BJ (cell line): ENCODE measurements at regions of chr9 and their contacts with region 1.

Region 1: DNA sequence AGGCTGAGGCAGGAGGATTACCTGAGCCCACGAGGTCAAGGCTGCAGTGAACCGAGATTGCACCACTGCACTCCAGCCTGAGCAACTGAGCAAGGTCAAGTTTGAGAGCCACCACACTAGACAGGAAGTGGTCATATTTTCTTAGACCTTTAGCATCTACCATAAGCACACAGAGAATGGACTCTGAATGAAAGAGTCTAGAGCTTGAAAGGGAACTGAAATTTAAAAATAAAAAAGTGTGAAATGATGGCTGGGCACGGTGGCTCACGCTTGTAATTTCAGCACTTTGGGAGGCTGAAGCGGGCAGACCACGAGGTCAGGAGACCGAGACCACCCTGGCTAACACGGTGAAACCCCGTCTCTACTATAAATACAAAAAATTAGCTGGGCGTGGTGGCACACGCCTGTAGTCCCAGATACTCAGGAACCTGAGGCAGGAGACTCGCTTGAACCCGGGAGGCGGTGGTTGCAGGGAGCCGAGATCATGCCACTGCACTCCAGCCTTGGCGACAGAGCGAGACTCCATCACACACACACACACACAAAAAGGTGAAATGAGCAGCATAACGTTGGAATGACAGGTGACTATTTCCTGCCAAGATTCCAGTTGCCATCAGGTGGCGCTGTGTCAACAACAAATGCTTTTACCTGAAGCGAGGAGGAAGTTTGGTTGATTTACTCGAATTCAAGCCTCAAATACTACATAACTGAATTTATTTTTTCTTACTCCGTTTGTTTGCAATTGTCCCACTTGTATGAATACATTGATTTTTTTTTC is 21.3 kb upstream of the AK3 start:
- DNase-seq: no peak
- H3K4me3 ChIP-seq: no peak overlapping the region
- H3K27me3 ChIP-seq: no peaks in the 10 kb centered on the region
- CTCF ChIP-seq: peak; percentile 74

Region 2: GRCh38 chr9:4750023-4750673 is 12.1 kb before region 1 on chr9:
- CTCF ChIA-PET with region 1: interaction called, 42 read pairs
- POLR2A ChIA-PET with region 1: no interaction called
- DNase-seq: no peak
- H3K4me3 ChIP-seq: no peak overlapping the region
- H3K27me3 ChIP-seq: no peaks in the 10 kb centered on the region
- CTCF ChIP-seq: peak; percentile 64

Region 3: DNA sequence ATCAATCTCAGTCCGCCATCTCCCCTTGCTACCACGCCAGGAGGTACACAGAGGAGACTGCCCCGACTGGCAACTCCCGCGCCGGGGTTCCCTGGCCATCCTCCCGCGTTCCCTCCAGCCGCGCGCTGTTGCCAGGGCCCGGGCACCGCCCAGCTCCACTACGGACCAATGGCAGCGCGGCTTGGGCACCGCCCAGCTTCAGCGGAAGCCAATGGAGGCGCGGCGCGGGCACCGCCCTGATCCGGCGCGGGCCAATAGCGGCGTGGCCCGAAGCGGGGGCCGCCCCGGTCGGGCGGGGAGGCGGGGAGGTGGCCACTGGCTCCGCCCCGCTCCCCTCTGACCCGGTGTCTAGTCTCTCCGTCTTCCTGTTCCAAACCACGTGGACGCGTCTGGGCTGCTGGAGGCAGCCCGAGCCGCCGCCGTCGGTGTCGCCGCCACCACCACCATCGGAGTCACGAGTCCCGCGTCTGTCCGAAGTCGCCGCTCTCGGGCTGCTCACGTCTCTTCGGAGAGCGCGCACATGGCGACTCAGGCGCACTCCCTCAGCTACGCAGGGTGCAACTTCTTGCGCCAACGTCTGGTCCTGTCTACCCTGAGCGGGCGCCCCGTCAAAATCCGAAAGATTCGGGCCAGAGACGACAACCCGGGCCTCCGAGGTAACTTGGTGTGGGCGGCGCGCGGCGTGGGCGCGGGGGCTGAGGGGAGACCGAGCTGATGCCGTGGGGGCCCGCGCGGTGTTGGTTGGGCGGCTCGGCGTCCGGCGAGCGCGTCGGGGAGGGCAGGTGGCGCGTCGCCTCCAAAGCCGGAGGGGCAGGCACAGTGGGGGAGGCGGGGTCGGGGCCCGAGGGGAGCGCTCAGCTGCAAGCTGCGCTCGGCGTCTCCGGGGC is 30.5 kb after region 1 on chr9 and contains the start of gene RCL1:
- CTCF ChIA-PET with region 1: interaction called, 17 read pairs
- POLR2A ChIA-PET with region 1: no interaction called
- DNase-seq: peak; percentile 62
- H3K4me3 ChIP-seq: peak within 1 kb of the TSS; percentile 97
- H3K27me3 ChIP-seq: 0 out of 2 replicates have a peak, but pooled peaks cover 3% of the 10 kb centered on the region
- CTCF ChIP-seq: no peak
- polyA plus RNA-seq, gene RCL1: 3.7 and 5.1 TPM in 2 replicates

Region 4: GRCh38 chr9:4923580-4924544 is 161.6 kb after region 1 on chr9:
- CTCF ChIA-PET with region 1: interaction called, 40 read pairs
- POLR2A ChIA-PET with region 1: interaction called, 3 read pairs
- DNase-seq: no peak
- H3K4me3 ChIP-seq: no peak overlapping the region
- H3K27me3 ChIP-seq: no peaks in the 10 kb centered on the region
- CTCF ChIP-seq: peak; percentile 40

Region 5: DNA sequence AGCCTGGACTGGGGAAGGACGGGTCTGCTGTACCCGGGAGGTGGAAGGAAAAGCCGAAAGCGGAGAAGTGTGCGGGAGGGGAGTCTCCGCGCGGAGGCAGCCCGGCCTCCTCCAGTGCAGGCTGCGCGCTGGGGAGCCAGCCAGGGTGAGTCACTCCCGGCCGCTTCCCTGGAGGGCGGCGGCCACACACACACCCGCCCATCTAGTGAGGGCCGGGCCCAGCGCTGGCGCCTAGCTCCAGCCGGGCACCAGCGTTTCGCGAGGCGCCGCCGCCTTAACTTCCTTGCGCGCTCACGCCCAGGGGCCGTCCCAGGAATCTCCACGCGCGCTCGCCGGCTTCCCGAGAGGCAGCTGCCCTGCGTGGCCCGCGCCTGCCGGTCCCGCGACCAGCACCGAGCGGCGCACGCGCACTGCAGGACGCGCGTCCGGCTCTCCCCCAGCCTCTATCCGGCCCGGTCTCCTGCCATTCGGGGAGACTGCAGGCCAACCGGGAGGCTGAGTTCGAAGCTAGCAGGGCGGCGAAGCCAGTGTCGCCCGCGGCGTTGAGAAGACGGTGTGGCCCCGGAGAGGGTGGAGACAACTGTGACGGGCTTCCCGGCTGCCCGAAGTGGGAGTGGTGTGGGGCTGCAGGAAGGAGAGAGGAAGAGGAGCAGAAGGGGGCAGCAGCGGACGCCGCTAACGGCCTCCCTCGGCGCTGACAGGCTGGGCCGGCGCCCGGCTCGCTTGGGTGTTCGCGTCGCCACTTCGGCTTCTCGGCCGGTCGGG is 222.5 kb after region 1 on chr9 and contains the start of gene JAK2:
- CTCF ChIA-PET with region 1: interaction called, 154 read pairs
- POLR2A ChIA-PET with region 1: no interaction called
- DNase-seq: peak; percentile 65
- H3K4me3 ChIP-seq: peak within 1 kb of the TSS; percentile 87
- H3K27me3 ChIP-seq: no peaks in the 10 kb centered on the region
- CTCF ChIP-seq: peak; percentile 65
- polyA plus RNA-seq, gene JAK2: 2.0 and 3.8 TPM in 2 replicates